MCF 10A (cell line): ENCODE measurements at regions of chr4 and their contacts with region 1.

Region 1: GRCh38 chr4:53507671-53508286 is 83.5 kb downstream of the LNX1 start:
- DNase-seq: peak; percentile 24
- H3K4me3 Mint-ChIP-seq: no peak overlapping the region
- H3K27ac Mint-ChIP-seq: no peak overlapping the region
- H3K4me1 Mint-ChIP-seq: peaks cover 10% of the 10 kb centered on the region
- H3K27me3 Mint-ChIP-seq: no peaks in the 10 kb centered on the region
- CTCF ChIP-seq: no peak

Region 2: GRCh38 chr4:53119680-53120079 is 388.1 kb before region 1 on chr4:
- CTCF ChIA-PET with region 1: no interaction called
- POLR2A ChIA-PET with region 1: no interaction called
- intact Hi-C with region 1: no loop called
- DNase-seq: peak; percentile 28
- H3K4me3 Mint-ChIP-seq: no peak overlapping the region
- H3K27ac Mint-ChIP-seq: no peak overlapping the region
- H3K4me1 Mint-ChIP-seq: no peaks in the 10 kb centered on the region
- H3K27me3 Mint-ChIP-seq: no peaks in the 10 kb centered on the region
- CTCF ChIP-seq: no peak

Region 3: DNA sequence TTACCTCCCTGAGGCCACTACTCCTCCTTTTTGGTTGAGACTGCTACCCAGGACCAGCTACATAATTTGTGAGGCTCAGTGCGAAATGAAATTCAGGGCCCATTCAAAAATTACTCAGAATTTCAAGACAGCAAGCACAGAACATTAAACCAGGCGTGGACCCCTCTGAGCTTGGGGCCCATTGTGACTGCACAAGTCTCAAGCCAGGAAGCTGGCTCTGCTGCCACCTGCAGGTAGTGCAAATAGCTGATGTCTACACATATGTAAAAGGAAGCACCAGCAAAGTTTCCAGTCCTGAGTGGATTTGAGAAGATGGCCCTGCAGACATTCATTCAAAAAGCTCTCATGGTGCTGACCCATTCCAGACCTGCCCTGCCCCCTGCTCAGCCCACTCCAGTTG is 296.9 kb after region 1 on chr4:
- CTCF ChIA-PET with region 1: interaction called, 5 read pairs
- POLR2A ChIA-PET with region 1: no interaction called
- intact Hi-C with region 1: loop called (anchors 2 kb)
- DNase-seq: peak; percentile 55
- H3K4me3 Mint-ChIP-seq: no peak overlapping the region
- H3K27ac Mint-ChIP-seq: no peak overlapping the region
- H3K4me1 Mint-ChIP-seq: no peaks in the 10 kb centered on the region
- H3K27me3 Mint-ChIP-seq: no peaks in the 10 kb centered on the region
- CTCF ChIP-seq: peak; percentile 43

Region 4: DNA sequence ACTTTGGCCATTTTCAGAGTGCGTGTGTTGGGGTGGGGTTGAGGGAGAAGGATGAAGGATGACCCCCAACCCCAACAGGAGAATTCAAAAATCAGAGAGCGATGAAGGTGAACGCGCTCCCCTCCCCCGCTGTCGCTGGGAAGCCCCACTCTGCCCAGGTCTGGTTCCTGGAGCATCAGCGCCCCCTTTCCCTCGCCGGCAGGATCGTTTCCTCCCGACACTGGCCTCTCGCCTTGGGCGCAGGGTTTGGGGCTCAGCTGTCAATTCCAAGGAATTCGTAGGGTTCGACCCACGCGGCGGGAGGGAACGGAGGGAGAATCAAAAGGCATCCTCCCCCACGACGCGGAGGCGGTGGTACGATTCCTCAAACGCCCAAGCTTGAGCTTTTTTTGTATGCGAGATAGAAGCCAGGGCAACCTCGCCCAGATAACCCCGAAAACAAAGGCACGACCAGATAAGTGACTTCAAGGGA is 720.3 kb after region 1 on chr4:
- CTCF ChIA-PET with region 1: interaction called, 4 read pairs
- POLR2A ChIA-PET with region 1: no interaction called
- intact Hi-C with region 1: loop called (anchors 5 kb)
- DNase-seq: peak; percentile 71
- H3K4me3 Mint-ChIP-seq: peak overlapping the region; percentile 78
- H3K27ac Mint-ChIP-seq: no peak overlapping the region
- H3K4me1 Mint-ChIP-seq: peaks cover 6% of the 10 kb centered on the region
- H3K27me3 Mint-ChIP-seq: peaks cover 26% of the 10 kb centered on the region
- CTCF ChIP-seq: peak; percentile 85